WTC11 (cell line): ENCODE measurements at regions of chr1 and their contacts with region 1.

Region 1: DNA sequence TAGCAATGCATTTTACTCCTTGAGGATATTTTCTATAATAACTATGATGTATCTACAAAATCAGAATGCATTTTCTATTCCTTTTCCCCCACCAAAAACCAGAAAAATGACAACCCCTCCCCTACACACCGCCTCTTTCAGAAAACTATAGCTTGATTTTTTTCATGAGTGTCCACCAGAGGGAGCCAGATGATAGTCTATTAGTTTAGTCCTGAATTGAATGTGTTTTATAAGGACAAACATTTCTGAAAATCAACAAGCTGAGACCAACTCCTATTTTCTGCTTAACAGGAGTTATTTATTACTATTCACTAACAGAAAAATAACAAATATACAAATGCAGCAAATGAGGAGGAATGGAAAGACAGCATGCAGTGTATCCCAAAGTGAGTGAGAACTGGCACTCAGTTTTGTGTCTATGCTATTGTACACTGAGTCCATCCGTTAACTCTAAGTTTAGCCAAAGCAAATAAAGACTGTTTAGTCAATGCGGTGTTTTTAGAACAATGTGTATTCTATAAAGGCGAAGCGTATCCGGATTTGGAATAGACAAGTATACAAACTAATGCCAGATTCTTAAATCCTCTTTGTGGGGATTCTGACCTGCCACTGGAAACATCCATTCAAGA is 182.6 kb downstream of the VAV3 start:
- DNase-seq: no peak
- ATAC-seq: no peak; the same call in 1 of the 2 replicates
- H3K4me3 Mint-ChIP-seq: no peak overlapping the region
- H3K27ac Mint-ChIP-seq: no peak overlapping the region
- H3K4me1 Mint-ChIP-seq: peaks cover 5% of the 10 kb centered on the region; the same call in 1 of the 2 replicates
- H3K27me3 Mint-ChIP-seq: no peaks in the 10 kb centered on the region
- CTCF ChIP-seq: peak; percentile 68

Region 2: GRCh38 chr1:107963601-107964335 is 181.4 kb after region 1 on chr1:
- CTCF ChIA-PET with region 1: interaction called, 26 read pairs
- POLR2A ChIA-PET with region 1: interaction called, 3 read pairs
- DNase-seq: peak; percentile 37
- ATAC-seq: peak; percentile 15
- H3K4me3 Mint-ChIP-seq: peak overlapping the region; percentile 91
- H3K27ac Mint-ChIP-seq: peak overlapping the region; percentile 34
- H3K4me1 Mint-ChIP-seq: peaks cover 19% of the 10 kb centered on the region
- H3K27me3 Mint-ChIP-seq: peaks cover 17% of the 10 kb centered on the region
- CTCF ChIP-seq: no peak

Region 3: DNA sequence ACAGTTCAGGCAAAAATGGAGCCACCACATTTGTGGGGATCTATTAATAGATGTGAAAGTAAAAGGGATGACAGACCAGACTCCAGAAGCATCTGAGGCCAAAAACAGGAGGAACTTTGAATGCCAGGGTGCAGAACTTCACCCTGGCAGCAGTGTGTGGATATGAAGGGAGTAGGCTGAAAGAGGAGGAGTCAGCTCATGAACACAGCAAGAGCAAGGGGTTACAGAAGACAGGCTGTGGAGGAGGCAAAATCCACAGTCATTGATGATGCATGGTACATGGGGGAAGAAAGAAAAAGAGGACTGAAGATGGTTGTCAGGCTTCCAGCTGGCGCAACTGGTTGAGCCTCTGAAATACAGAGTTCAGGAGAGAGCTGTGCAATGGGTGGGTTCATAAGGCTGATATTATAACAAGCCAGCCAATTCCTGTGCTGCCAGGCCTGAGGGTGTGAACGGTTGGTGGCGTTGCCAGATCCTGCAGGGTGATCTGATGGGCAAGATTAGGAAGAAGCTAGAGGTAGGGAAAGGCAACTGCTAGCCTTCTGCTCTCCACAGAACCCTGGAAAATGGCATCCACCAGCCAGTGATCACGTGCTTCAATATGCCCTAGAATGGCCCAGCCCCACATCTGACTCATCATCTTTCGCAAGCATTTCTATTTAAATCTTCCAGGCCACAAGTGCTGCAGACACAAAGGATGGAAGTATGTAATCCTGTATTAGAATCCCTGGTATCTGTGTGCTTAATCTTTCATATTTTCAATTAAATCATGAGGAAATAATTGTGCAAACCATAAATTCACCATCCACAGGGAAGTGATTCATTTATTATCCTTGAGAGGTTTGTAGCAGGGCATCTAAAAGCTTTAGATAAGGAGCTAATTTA is 335.9 kb after region 1 on chr1:
- CTCF ChIA-PET with region 1: interaction called, 185 read pairs
- POLR2A ChIA-PET with region 1: no interaction called
- DNase-seq: no peak
- ATAC-seq: no peak
- H3K4me3 Mint-ChIP-seq: no peak overlapping the region
- H3K27ac Mint-ChIP-seq: no peak overlapping the region
- H3K4me1 Mint-ChIP-seq: peaks cover 11% of the 10 kb centered on the region
- H3K27me3 Mint-ChIP-seq: no peaks in the 10 kb centered on the region
- CTCF ChIP-seq: no peak